K562 (cell line): ENCODE measurements at regions of chr1 and their contacts with region 1.

Region 1: DNA sequence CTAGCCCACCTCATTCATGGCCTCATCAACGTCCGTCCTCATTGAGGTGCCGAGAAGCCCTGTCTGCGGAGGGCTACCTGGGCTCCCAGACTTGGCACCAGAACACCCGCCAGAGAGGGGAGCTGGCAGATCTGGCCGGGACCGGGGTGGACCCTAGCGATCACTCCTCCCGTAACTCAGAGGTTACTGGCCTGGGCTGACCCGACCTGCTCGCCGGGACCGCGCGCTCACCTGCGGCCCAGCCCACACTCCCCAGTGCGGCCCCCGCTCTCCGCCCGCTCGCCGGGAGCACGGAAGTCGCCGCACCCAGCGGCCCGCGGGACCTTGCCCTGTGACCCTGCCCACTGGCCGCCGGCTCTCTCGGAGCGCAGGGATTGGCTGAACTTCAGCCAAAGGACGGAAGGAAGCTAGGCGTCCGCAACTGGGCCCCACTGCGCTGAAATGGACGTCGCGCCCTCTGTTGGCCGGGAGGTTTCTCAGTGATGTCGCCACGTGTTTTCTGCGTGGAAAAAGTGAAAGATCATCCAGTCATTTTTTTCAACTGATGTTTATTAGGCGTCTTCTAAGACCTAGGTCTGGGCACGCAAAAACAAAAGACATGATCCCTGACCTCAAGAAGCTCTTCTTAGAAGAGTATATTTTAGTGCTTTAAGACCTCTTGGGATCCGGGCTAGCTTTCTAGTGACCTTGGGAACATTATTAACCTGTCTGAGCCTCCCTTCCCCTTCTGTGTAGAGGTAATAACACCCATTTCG is at the start of gene SMIM12:
- DNase-seq: peak; percentile 99
- ATAC-seq: peak; percentile 99
- H3K4me3 ChIP-seq: peak within 1 kb of the TSS; percentile 83
- H3K27ac ChIP-seq: peak within 1 kb of the TSS; percentile 85
- H3K4me1 ChIP-seq: peaks cover 3 to 20% of the 10 kb centered on the region in 2 experiments; a peak in 3 of 5 replicates
- H3K27me3 ChIP-seq: no peaks in the 10 kb centered on the region
- CTCF ChIP-seq: peak; percentile 82 to 95 (median 94)
- EP300 ChIP-seq: peak; percentile 68
- POLR2A ChIP-seq: peak; percentile 98
- RAD21 ChIP-seq: no peak
- polyA plus RNA-seq, gene SMIM12: 51.7 to 54.1 TPM

Region 2: DNA sequence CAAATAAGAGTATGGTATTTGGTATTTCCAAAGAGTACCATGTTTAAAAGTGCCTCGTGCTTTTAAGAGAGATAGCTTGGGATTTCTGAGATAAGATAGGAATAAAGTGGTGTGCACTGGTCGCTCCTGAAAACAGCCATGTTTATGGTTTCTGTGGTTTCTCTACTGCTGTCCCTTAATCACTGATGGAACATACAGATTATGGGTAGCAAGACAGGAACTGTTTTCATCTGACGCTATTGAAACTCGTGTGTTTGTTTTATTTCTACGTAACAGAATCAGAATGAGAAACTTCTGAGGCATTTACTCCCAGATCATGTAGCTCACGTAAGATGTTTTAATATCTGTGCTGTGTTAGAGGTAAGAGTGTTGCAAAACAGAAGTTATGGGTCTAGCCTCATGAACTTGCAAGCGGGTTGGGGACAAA is 571.6 kb after region 1 on chr1:
- CTCF ChIA-PET with region 1: no interaction called
- POLR2A ChIA-PET with region 1: interaction called, 3 read pairs
- in situ Hi-C with region 1: no loop called
- intact Hi-C with region 1: loop called (anchors 10 kb)
- DNase-seq: peak in 2 of 4 experiments; percentile 32 to 39
- ATAC-seq: peak; percentile 59
- H3K4me3 ChIP-seq: no peak overlapping the region
- H3K27ac ChIP-seq: no peak overlapping the region
- H3K4me1 ChIP-seq: peaks cover 10 to 11% of the 10 kb centered on the region in 2 experiments; a peak in 4 of 5 replicates
- H3K27me3 ChIP-seq: no peaks in the 10 kb centered on the region
- CTCF ChIP-seq: no peak
- EP300 ChIP-seq: no peak
- POLR2A ChIP-seq: no peak
- RAD21 ChIP-seq: 0 out of 4 replicates have a peak, but pooled peaks of 1 of the 2 experiments have one; percentile 25

Region 3: DNA sequence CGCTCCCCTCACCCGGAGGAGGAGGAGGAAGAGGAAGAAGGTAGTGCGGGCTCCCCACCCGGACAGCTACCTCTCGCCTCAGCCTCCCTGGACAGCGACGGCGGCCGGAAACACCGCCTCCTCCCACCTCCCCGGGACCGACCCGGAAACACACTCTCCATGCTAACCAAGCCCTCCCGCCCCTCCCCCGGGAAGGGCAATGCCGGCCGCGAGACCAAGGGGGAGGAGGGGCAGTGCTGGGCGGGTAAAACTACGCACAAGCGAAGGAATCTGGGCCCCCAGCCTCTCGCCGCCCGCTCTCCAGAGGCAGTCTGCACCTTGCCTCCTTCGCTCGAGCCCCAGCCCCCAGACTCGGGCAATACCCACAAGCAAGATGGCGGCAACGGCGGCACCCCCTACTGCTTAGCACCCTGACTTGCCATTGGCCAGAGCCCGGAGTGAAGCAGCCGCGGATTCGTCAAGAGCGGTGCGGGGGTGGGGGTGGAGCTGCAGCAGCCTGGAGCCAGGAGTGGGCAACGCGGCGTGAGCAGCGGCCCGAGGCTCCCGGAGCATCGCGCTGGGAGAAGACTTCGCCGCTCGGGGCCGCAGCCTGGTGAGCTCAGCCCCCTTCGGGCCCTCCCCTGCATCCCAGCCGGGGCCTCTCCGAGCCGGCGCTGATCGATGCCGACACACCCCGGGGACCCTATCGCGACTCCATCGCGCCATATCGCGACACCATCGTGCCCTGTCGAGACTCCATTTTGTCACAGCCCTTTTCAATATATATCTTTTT is 697.9 kb after region 1 on chr1 and contains the starts of genes KIAA0319L and NCDN:
- CTCF ChIA-PET with region 1: no interaction called
- POLR2A ChIA-PET with region 1: no interaction called
- in situ Hi-C with region 1: no loop called
- intact Hi-C with region 1: loop called (anchors 5 kb)
- DNase-seq: peak; percentile 98 to 99 (median 98)
- ATAC-seq: peak; percentile 94
- H3K4me3 ChIP-seq: peak within 1 kb of the TSS; percentile 91
- H3K27ac ChIP-seq: peak within 1 kb of the TSS; percentile 98
- H3K4me1 ChIP-seq: peaks cover 19 to 39% of the 10 kb centered on the region in 2 experiments
- H3K27me3 ChIP-seq: no peaks in the 10 kb centered on the region
- CTCF ChIP-seq: no peak; a peak in 1 of 6 replicates
- EP300 ChIP-seq: no peak; the same call in 1 of the 2 replicates
- POLR2A ChIP-seq: peak; percentile 94
- RAD21 ChIP-seq: no peak
- polyA plus RNA-seq, gene KIAA0319L: 2.4 to 5.9 TPM
- polyA plus RNA-seq, gene NCDN: 1.9 to 2.6 TPM